ENCODE measurements at regions of chr2 and their contacts with region 1.

Region 1: GRCh38 chr2:15218423-15219086 is 342.6 kb downstream of the NBAS start:
- DNase-seq: no peak
- ATAC-seq: no peak
- H3K4me3 ChIP-seq: no peak overlapping the region
- H3K27ac ChIP-seq: no peak overlapping the region
- H3K4me1 ChIP-seq: peaks cover 0 to 3% (median 0%) of the 10 kb centered on the region in 9 donors
- H3K27me3 ChIP-seq: no peaks in the 10 kb centered on the region
- CTCF ChIP-seq: no peak

Region 2: DNA sequence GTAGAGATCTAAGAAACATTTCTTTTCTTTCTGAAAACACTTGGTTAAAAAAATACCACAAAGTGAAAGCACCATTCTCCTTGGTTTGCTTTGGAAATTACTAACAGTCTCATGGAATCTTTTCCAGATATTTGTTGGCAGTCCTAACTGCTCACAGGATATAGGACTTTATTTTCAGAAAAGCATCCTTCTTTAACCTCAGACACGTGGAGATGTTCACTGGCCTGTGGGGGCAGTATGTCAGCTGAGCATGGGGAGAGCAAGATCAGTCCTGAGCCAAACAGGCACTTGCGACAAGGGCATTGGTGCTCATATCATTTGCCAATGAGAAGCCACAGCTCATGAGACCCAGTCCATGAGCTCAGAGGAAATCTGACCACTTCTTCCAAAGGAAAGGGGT is 29.3 kb before region 1 on chr2:
- intact Hi-C with region 1: loop called in 1 of 10 experiments (anchors 2 kb)
- DNase-seq: no peak
- ATAC-seq: no peak
- H3K4me3 ChIP-seq: no peak overlapping the region
- H3K27ac ChIP-seq: no peak overlapping the region
- H3K4me1 ChIP-seq: no peaks in the 10 kb centered on the region
- H3K27me3 ChIP-seq: no peaks in the 10 kb centered on the region
- CTCF ChIP-seq: no peak

Region 3: GRCh38 chr2:15241201-15241600 is 22.6 kb after region 1 on chr2:
- intact Hi-C with region 1: no loop called
- DNase-seq: no peak
- ATAC-seq: peak in 1 of 8 donors; percentile 25
- H3K4me3 ChIP-seq: no peak overlapping the region
- H3K27ac ChIP-seq: no peak overlapping the region
- H3K4me1 ChIP-seq: no peaks in the 10 kb centered on the region
- H3K27me3 ChIP-seq: no peaks in the 10 kb centered on the region
- CTCF ChIP-seq: no peak

Region 4: DNA sequence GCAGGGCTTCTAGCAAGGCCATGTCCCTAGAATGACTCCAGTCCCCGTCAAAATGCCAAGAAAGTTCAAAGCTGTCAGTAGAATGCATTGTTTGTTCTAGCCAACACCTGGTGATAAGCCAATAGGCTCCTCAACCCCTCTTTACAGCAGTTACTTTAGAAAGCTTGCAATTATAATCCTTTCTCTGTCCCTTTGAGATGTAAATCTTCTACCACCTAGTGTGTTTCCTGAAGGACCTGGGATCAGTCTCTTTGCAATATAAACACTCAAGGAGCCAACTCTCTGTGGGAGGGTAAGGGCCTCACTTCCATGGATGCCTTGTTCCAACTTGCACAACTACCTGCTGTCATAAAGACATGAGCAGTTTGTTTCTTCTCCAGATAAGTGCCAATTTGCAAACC is 40.8 kb after region 1 on chr2:
- intact Hi-C with region 1: no loop called
- DNase-seq: no peak
- ATAC-seq: no peak
- H3K4me3 ChIP-seq: no peak overlapping the region
- H3K27ac ChIP-seq: no peak overlapping the region
- H3K4me1 ChIP-seq: no peaks in the 10 kb centered on the region
- H3K27me3 ChIP-seq: no peaks in the 10 kb centered on the region
- CTCF ChIP-seq: no peak

Region 5: GRCh38 chr2:15730545-15731212 is 512.1 kb after region 1 on chr2:
- intact Hi-C with region 1: no loop called
- DNase-seq: peak; percentile 94 to 95
- ATAC-seq: peak; percentile 86 to 96 (median 94)
- H3K4me3 ChIP-seq: no peak overlapping the region
- H3K27ac ChIP-seq: peak overlapping the region in 4 of 10 donors; percentile 6 to 77 (median 54)
- H3K4me1 ChIP-seq: peaks cover 26 to 59% (median 51%) of the 10 kb centered on the region in 9 donors
- H3K27me3 ChIP-seq: no peaks in the 10 kb centered on the region
- CTCF ChIP-seq: no peak

Measured in heart right ventricle (tissue), 16 donors.